ENCODE measurements at regions of chr1 and their contacts with region 1.

Region 1: GRCh38 chr1:6359216-6360116 is 34.1 kb downstream of the ACOT7 start:
- DNase-seq: peak; percentile 23
- ATAC-seq: peak; percentile 92
- H3K4me3 Mint-ChIP-seq: peak overlapping the region; percentile 46
- H3K27ac Mint-ChIP-seq: peak overlapping the region; percentile 76
- H3K4me1 Mint-ChIP-seq: peaks cover 26% of the 10 kb centered on the region
- H3K27me3 Mint-ChIP-seq: no peaks in the 10 kb centered on the region
- CTCF ChIP-seq: no peak

Region 2: DNA sequence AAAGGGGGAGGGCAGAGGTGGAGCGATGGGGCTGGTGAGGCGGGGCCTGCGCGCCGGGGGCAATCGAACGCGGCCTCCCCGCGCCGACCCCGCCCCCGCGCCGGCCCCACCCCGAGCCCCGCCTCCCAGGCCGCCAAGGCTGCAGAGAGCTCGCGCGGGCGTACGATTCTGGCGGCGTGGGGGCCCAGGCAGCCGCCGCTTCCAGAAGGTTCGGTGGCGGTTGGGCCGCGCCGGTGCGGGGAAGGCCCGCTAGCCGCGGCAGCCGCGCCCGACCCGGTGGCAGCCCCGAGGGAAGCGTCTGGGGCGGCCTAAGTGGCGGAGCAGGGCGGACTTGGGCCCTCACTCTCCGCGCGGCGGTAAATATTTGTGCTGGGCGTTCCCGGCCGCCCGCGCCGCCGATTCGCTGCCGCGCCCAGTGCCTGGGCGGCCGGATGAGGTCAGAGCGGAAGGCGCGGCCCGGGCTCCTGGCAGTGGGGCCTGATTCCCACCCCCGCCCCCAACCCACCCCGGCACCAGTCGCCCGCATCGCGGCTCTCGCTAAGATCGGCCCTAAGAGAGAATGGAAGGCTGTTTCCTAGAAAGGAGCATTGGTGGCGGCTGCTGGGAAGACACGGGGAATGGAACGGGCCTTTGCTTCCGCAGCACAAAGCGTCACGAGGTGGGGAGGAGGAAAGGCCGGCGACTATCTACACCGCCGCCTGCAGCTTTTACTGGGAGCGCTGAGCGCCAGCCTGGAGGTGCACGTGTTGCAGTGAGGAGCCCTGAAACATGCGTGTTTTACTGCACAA is 34.1 kb after region 1 on chr1 and contains the start of gene ACOT7:
- CTCF ChIA-PET with region 1: no interaction called
- POLR2A ChIA-PET with region 1: interaction called, 8 read pairs
- intact Hi-C with region 1: loop called (anchors 2 kb)
- DNase-seq: peak; percentile 86
- ATAC-seq: peak; percentile 91
- H3K4me3 Mint-ChIP-seq: peak within 1 kb of the TSS; percentile 87
- H3K27ac Mint-ChIP-seq: peak within 1 kb of the TSS; percentile 93
- H3K4me1 Mint-ChIP-seq: peaks cover 22% of the 10 kb centered on the region
- H3K27me3 Mint-ChIP-seq: no peaks in the 10 kb centered on the region
- CTCF ChIP-seq: no peak
- total RNA-seq, gene ACOT7: 12.3 and 12.7 TPM in 2 replicates

Region 3: GRCh38 chr1:6401673-6402072 is 42.2 kb after region 1 on chr1:
- CTCF ChIA-PET with region 1: interaction called, 38 read pairs
- POLR2A ChIA-PET with region 1: no interaction called
- intact Hi-C with region 1: loop called (anchors 1 kb)
- DNase-seq: no peak
- ATAC-seq: no peak
- H3K4me3 Mint-ChIP-seq: no peak overlapping the region
- H3K27ac Mint-ChIP-seq: no peak overlapping the region
- H3K4me1 Mint-ChIP-seq: no peaks in the 10 kb centered on the region
- H3K27me3 Mint-ChIP-seq: peaks cover 11% of the 10 kb centered on the region
- CTCF ChIP-seq: no peak

Region 4: DNA sequence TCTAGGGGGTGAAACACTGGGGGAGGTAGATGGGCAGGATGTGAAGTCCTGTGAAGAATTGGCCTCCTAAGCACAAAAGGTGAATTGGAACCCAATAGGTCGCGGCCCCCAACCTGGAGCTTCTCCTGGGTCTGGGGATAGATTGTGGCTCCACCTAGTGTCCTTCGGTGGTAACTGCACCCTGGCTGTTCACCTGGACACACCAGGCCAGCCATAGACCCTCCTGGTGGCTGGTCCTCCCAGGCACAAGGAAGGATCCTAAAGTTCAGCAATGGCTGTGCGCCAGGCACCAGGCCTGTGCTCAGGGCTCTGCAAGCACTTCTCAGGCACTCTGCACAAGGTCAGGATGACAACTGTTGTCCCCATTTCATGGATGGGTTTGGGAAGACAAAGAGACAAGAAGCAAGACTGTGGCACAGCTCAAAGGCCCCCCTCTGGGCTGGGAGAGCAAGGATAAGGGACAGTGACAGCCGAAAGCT is 78.6 kb after region 1 on chr1:
- CTCF ChIA-PET with region 1: interaction called, 12 read pairs
- POLR2A ChIA-PET with region 1: no interaction called
- intact Hi-C with region 1: no loop called
- DNase-seq: peak; percentile 57
- ATAC-seq: peak; percentile 59
- H3K4me3 Mint-ChIP-seq: no peak overlapping the region
- H3K27ac Mint-ChIP-seq: no peak overlapping the region
- H3K4me1 Mint-ChIP-seq: peaks cover 7% of the 10 kb centered on the region
- H3K27me3 Mint-ChIP-seq: peaks cover 44% of the 10 kb centered on the region
- CTCF ChIP-seq: peak; percentile 68

Measured in activated B cell treated with CpG ODN at 0.5 μM for 24 hours (primary cell).